GM10248 (cell line): ENCODE measurements at regions of chr2 and their contacts with region 1.

Region 1: DNA sequence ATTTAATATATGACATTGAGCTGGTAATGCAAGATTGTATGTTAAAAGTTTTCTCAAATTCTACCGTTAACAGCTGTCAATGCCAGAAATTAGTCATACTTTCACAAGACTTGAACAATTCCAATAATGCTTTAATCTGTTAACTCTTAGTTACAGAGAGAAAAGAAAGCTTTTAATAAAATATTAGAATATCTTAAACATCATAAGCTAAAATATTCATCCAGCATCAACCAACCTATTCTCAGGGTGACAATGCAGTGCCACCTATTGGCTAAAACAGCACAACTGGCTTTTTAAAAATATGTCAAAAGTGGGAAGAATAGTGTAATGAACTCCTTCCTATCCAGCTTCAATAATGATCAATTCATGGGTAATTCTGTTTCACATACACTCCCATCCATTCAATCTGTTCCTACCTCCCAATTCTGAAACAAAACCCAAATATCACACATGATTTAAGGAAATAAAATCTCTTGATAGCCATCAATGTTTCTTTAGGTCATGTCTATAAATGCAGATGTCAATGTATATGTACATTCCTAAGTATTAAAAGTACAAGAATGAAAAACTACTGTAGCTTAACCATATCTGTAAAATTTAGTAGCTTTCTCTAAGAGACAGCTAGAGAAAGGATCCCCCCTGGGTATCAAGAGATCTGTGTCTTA is 79.8 kb upstream of the CCDC141 start:
- DNase-seq: peak; percentile 24
- CTCF ChIP-seq: peak; percentile 58

Region 2: GRCh38 chr2:178761759-178762371 is 367.8 kb before region 1 on chr2:
- CTCF ChIA-PET with region 1: interaction called, 10 read pairs
- POLR2A ChIA-PET with region 1: no interaction called
- DNase-seq: peak; percentile 25
- CTCF ChIP-seq: peak; percentile 55

Region 3: GRCh38 chr2:178796079-178796677 is 333.5 kb before region 1 on chr2:
- CTCF ChIA-PET with region 1: interaction called, 14 read pairs
- POLR2A ChIA-PET with region 1: no interaction called
- DNase-seq: peak; percentile 46
- CTCF ChIP-seq: peak; percentile 49

Region 4: GRCh38 chr2:178891265-178891958 is 238.3 kb before region 1 on chr2:
- CTCF ChIA-PET with region 1: interaction called, 24 read pairs
- POLR2A ChIA-PET with region 1: no interaction called
- DNase-seq: peak; percentile 34
- CTCF ChIP-seq: peak; percentile 84

Region 5: DNA sequence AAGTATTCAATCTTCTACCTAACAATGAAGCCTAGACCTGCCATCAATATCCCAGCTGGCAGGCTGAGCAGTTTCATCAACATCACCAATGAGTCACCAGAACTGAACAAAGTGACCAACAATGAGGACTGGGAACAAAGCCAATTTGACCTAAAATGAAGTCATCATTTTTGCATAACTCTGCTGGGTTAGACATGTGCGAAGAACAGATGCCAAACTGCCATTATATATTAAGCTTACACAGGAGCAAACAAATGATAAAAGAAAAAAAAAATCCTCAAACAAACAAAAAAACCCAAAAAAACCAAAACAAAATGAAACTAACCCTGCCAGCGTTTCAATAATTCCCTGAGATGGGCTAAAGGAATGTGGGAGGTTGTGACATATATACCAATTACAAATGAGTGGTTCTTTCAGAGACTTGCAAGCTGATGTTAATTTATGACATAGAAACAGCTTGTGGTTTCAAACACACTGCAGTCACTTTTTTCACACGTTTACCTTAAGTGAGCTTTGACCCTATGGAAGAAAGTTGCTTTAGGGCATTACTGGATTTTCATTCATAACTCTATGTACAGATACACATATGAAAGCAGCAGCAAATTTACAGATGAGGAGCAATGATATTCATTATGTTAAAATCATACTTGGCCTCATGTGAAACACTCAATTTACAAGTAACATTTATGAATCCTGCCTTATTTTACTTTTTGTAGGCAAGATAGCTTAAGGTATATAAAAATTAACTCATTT is 22.9 kb before region 1 on chr2:
- CTCF ChIA-PET with region 1: interaction called, 14 read pairs
- POLR2A ChIA-PET with region 1: no interaction called
- DNase-seq: no peak
- CTCF ChIP-seq: no peak